ENCODE measurements at regions of chr19 and their contacts with region 1.

Region 1: DNA sequence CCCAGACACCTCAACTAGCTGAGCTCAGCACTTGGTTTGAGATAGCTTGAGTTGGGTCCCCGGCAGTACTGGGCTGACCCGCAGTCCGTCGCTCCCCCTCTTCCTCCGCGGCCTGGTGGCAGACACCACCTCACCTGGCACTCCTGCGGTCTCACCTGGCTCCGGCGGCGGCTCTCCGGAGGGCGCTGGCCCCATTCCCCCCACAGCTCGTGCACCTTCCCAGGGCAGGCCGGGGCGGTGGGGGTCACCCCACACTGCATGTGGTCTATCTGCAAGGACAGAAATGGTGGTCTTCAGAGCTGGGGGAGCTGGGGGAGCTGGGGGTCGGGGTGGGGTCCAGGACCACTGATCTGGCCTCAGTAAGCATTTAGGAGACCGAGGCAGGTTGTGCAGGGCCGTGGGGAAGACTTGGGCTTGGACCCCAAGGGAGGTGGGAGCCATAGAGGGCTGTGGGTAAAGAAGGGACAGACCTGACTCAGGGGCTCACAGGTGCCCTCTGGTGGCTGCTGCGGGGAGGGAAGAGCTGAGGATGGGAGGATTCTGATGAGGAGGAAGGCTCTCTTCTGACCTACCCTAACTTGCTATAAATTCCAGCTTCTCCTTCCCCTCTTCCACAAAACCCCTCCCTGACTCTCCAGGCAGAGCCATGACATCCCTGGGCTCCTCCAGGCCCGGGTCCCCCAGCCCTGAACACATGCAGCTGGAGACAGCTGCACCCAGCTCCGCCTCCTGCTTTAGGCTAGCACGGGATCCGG is 6.7 kb upstream of the PLIN4 start:
- DNase-seq: peak; percentile 84
- ATAC-seq: peak; percentile 94
- H3K4me3 Mint-ChIP-seq: no peak overlapping the region
- H3K27ac Mint-ChIP-seq: no peak overlapping the region
- H3K4me1 Mint-ChIP-seq: no peaks in the 10 kb centered on the region
- H3K27me3 Mint-ChIP-seq: no peaks in the 10 kb centered on the region
- CTCF ChIP-seq: peak; percentile 71

Region 2: GRCh38 chr19:4390567-4391305 is 134.2 kb before region 1 on chr19:
- CTCF ChIA-PET with region 1: no interaction called
- POLR2A ChIA-PET with region 1: no interaction called
- intact Hi-C with region 1: no loop called
- DNase-seq: no peak
- ATAC-seq: no peak
- H3K4me3 Mint-ChIP-seq: no peak overlapping the region
- H3K27ac Mint-ChIP-seq: peak overlapping the region; percentile 88
- H3K4me1 Mint-ChIP-seq: peaks cover 45% of the 10 kb centered on the region
- H3K27me3 Mint-ChIP-seq: no peaks in the 10 kb centered on the region
- CTCF ChIP-seq: no peak

Region 3: DNA sequence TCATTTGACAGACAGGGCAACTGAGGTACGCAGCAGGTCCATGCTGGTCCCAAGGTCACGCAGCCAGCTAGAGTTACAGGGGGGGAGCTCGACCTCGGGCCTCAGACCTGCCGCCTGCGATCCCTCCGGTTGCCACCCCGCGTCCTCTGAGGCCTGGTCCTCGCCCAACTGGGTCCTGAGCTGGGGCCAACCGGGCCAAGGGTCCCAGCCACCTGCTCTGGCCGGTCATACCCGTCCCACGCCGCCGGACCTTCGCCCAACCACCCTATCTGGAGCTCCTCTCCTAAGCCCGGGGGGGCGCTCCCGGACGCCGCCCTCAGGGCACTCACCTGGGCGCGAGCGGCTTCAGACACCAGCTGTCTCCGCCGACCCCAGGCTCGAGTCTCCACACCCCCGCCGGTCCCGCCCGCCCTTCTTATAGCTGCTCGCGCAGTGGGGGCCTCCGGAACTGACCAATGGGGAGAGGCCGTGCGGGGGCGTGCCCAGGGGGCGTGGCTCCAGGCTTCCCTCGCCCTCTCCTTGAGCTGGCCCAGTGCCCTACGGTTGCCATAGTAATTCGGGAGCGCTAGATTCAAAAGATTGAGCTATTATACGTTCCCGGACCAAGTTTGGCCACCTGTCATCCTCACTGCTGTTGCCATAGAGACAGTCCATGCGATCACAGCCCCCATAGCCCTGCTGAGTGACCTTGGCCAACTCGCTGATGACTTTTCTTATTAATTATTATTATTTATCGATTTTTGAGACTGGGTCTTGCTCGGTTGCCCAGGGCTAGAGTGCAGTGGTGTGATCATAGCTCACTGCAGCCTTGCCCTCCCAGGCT is 10.1 kb after region 1 on chr19 and contains the start of gene PLIN5:
- CTCF ChIA-PET with region 1: interaction called, 39 read pairs
- POLR2A ChIA-PET with region 1: interaction called, 5 read pairs
- intact Hi-C with region 1: no loop called
- DNase-seq: peak; percentile 70
- ATAC-seq: peak; percentile 80
- H3K4me3 Mint-ChIP-seq: no peak within 1 kb of the TSS
- H3K27ac Mint-ChIP-seq: no peak within 1 kb of the TSS
- H3K4me1 Mint-ChIP-seq: peaks cover 10% of the 10 kb centered on the region
- H3K27me3 Mint-ChIP-seq: peaks cover 12% of the 10 kb centered on the region
- CTCF ChIP-seq: no peak
- total RNA-seq, gene PLIN5: 0.27 TPM in 1 of 2 experiments, not detected in the other

Measured in activated CD8-positive, alpha-beta T cell treated with anti-CD3 and anti-CD28 coated beads for 36 hours (primary cell).